BJ (cell line): ENCODE measurements at regions of chr16 and their contacts with region 1.

Region 1: DNA sequence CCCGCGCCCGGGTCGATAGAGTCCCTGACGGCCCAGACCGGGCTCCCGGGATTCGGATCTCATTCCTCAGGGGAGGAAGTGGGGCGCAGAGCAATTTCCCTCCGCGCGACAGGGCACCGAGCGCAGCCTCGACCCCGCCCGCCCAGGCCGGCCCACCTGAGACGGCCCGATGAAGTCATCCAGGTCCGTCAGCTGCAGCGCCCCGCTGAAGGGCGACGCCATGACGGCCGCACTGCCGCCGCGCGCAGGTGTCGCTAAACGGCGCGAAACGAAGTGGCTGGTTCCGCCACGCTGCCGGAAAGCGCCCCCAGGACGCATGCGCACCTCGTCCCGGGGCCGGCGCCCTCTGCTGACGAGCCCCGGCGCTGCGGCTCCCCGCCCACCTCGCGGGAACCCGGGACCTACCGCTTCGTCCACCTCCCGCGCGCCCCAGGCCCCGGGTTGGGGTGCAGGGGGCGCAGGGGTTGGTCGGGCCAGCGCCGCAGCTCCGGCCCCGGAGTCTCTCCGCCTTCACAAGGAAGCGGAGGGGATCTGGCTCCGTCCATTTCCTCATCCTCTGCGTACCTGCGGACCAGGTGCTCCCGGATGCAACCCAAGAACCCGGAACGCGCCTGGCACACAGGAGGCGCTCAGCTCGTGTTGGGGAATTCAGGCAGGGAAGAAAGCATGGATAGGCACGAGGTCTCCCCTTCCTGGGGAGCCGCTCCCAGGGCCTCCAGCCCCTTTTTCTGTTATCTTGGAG is at the start of gene CIAO3:
- DNase-seq: no peak
- H3K4me3 ChIP-seq: peak within 1 kb of the TSS; percentile 95
- H3K27me3 ChIP-seq: no peaks in the 10 kb centered on the region
- CTCF ChIP-seq: peak; percentile 53
- polyA plus RNA-seq, gene CIAO3: 16.1 and 23.1 TPM in 2 replicates

Region 2: GRCh38 chr16:648781-649589 is 92.0 kb before region 1 on chr16 and contains the start of gene WDR90:
- CTCF ChIA-PET with region 1: no interaction called
- POLR2A ChIA-PET with region 1: no interaction called
- DNase-seq: peak; percentile 37
- H3K4me3 ChIP-seq: peak within 1 kb of the TSS; percentile 68
- H3K27me3 ChIP-seq: no peaks in the 10 kb centered on the region
- CTCF ChIP-seq: no peak
- polyA plus RNA-seq, gene WDR90: 6.2 and 10.0 TPM in 2 replicates

Region 3: GRCh38 chr16:782766-783403 is 42.0 kb after region 1 on chr16:
- CTCF ChIA-PET with region 1: interaction called, 14 read pairs
- POLR2A ChIA-PET with region 1: no interaction called
- DNase-seq: no peak
- H3K4me3 ChIP-seq: no peak overlapping the region
- H3K27me3 ChIP-seq: no peaks in the 10 kb centered on the region
- CTCF ChIP-seq: no peak